ENCODE measurements at regions of chr6 and their contacts with region 1.

Region 1: GRCh38 chr6:90080876-90081481 is 186.7 kb downstream of the GJA10 start:
- DNase-seq: peak; percentile 24 to 87 (median 82)
- ATAC-seq: peak; percentile 86
- H3K4me3 ChIP-seq: peak overlapping the region; percentile 57
- H3K4me3 Mint-ChIP-seq: peak overlapping the region; percentile 84 to 99 (median 89)
- H3K27ac ChIP-seq: peak overlapping the region; percentile 84
- H3K27ac Mint-ChIP-seq: peak overlapping the region; percentile 90 to 99 (median 97)
- H3K4me1 ChIP-seq: peaks cover 54 to 71% of the 10 kb centered on the region in 2 donors
- H3K4me1 Mint-ChIP-seq: peaks cover 48 to 100% (median 92%) of the 10 kb centered on the region in 7 donors
- H3K27me3 ChIP-seq: no peaks in the 10 kb centered on the region
- H3K27me3 Mint-ChIP-seq: peaks cover 0 to 11% (median 0%) of the 10 kb centered on the region in 5 donors

Region 2: GRCh38 chr6:89805814-89806371 is 275.1 kb before region 1 on chr6:
- CTCF ChIA-PET with region 1: no interaction called
- POLR2A ChIA-PET with region 1: no interaction called
- intact Hi-C with region 1: no loop called
- DNase-seq: no peak
- ATAC-seq: no peak
- H3K4me3 ChIP-seq: no peak overlapping the region
- H3K4me3 Mint-ChIP-seq: no peak overlapping the region
- H3K27ac ChIP-seq: no peak overlapping the region
- H3K27ac Mint-ChIP-seq: peak overlapping the region in 6 of 9 donors; percentile 7 to 69 (median 20)
- H3K4me1 ChIP-seq: no peaks in the 10 kb centered on the region
- H3K4me1 Mint-ChIP-seq: peaks cover 9 to 45% (median 28%) of the 10 kb centered on the region in 7 donors
- H3K27me3 ChIP-seq: no peaks in the 10 kb centered on the region
- H3K27me3 Mint-ChIP-seq: no peaks in the 10 kb centered on the region

Region 3: GRCh38 chr6:89970609-89971337 is 110.2 kb before region 1 on chr6:
- CTCF ChIA-PET with region 1: no interaction called
- POLR2A ChIA-PET with region 1: no interaction called
- intact Hi-C with region 1: loop called in 1 of 2 experiments (anchors 2 kb)
- DNase-seq: peak in 7 of 9 donors; percentile 31 to 54 (median 39)
- ATAC-seq: peak; percentile 72
- H3K4me3 ChIP-seq: no peak overlapping the region
- H3K4me3 Mint-ChIP-seq: no peak overlapping the region
- H3K27ac ChIP-seq: no peak overlapping the region
- H3K27ac Mint-ChIP-seq: no peak overlapping the region
- H3K4me1 ChIP-seq: peaks cover 0 to 15% of the 10 kb centered on the region in 2 donors
- H3K4me1 Mint-ChIP-seq: peaks cover 9 to 53% (median 40%) of the 10 kb centered on the region in 7 donors
- H3K27me3 ChIP-seq: no peaks in the 10 kb centered on the region
- H3K27me3 Mint-ChIP-seq: no peaks in the 10 kb centered on the region

Region 4: GRCh38 chr6:90103056-90103800 is 22.2 kb after region 1 on chr6:
- CTCF ChIA-PET with region 1: interaction called, 3 read pairs
- POLR2A ChIA-PET with region 1: interaction called, 11 read pairs
- intact Hi-C with region 1: loop called in 1 of 2 experiments (anchors 1 kb)
- DNase-seq: peak in 1 of 9 donors; percentile 41
- ATAC-seq: peak; percentile 59
- H3K4me3 ChIP-seq: peak overlapping the region; percentile 44
- H3K4me3 Mint-ChIP-seq: peak overlapping the region in 9 of 10 donors; percentile 6 to 69 (median 51)
- H3K27ac ChIP-seq: no peak overlapping the region
- H3K27ac Mint-ChIP-seq: peak overlapping the region in 8 of 9 donors; percentile 33 to 85 (median 72)
- H3K4me1 ChIP-seq: peaks cover 14 to 57% of the 10 kb centered on the region in 2 donors
- H3K4me1 Mint-ChIP-seq: peaks cover 41 to 97% (median 84%) of the 10 kb centered on the region in 7 donors
- H3K27me3 ChIP-seq: no peaks in the 10 kb centered on the region
- H3K27me3 Mint-ChIP-seq: no peaks in the 10 kb centered on the region

Region 5: GRCh38 chr6:90216072-90216977 is 135.3 kb after region 1 on chr6:
- CTCF ChIA-PET with region 1: no interaction called
- POLR2A ChIA-PET with region 1: interaction called, 3 read pairs
- intact Hi-C with region 1: loop called in 1 of 2 experiments (anchors 1 kb)
- DNase-seq: peak in 5 of 9 donors; percentile 61 to 82 (median 63)
- ATAC-seq: peak; percentile 69
- H3K4me3 ChIP-seq: peak overlapping the region; percentile 18
- H3K4me3 Mint-ChIP-seq: peak overlapping the region in 7 of 10 donors; percentile 42 to 74 (median 68)
- H3K27ac ChIP-seq: peak overlapping the region; percentile 85
- H3K27ac Mint-ChIP-seq: no peak overlapping the region
- H3K4me1 ChIP-seq: peaks cover 0 to 97% of the 10 kb centered on the region in 2 donors
- H3K4me1 Mint-ChIP-seq: peaks cover 0 to 33% (median 31%) of the 10 kb centered on the region in 7 donors
- H3K27me3 ChIP-seq: no peaks in the 10 kb centered on the region
- H3K27me3 Mint-ChIP-seq: no peaks in the 10 kb centered on the region

Region 6: GRCh38 chr6:90296346-90297114 is 215.6 kb after region 1 on chr6 and contains the start of gene BACH2:
- CTCF ChIA-PET with region 1: interaction called, 3 read pairs
- POLR2A ChIA-PET with region 1: interaction called, 4 read pairs
- intact Hi-C with region 1: loop called (anchors 1 kb)
- DNase-seq: peak; percentile 84 to 97 (median 94)
- ATAC-seq: peak; percentile 85
- H3K4me3 ChIP-seq: peak within 1 kb of the TSS; percentile 59
- H3K4me3 Mint-ChIP-seq: peak within 1 kb of the TSS; percentile 79 to 97 (median 92)
- H3K27ac ChIP-seq: peak within 1 kb of the TSS; percentile 95
- H3K27ac Mint-ChIP-seq: peak within 1 kb of the TSS; percentile 89 to 100 (median 97)
- H3K4me1 ChIP-seq: peaks cover 7 to 26% of the 10 kb centered on the region in 2 donors
- H3K4me1 Mint-ChIP-seq: peaks cover 0 to 47% (median 38%) of the 10 kb centered on the region in 7 donors
- H3K27me3 ChIP-seq: no peaks in the 10 kb centered on the region
- H3K27me3 Mint-ChIP-seq: peaks cover 0 to 29% (median 0%) of the 10 kb centered on the region in 5 donors
- total RNA-seq, gene BACH2: 33.0 to 193 (median 133) TPM

Measured in naive thymus-derived CD4-positive, alpha-beta T cell (primary cell).